ENCODE measurements at regions of chr17 and their contacts with region 1.

Region 1: GRCh38 chr17:64506576-64507477 is at the start of gene CEP95:
- DNase-seq: peak; percentile 91
- ATAC-seq: peak; percentile 53
- H3K4me3 Mint-ChIP-seq: peak within 1 kb of the TSS; percentile 100
- H3K27ac Mint-ChIP-seq: peak within 1 kb of the TSS; percentile 100
- H3K4me1 Mint-ChIP-seq: peaks cover 50% of the 10 kb centered on the region
- H3K27me3 Mint-ChIP-seq: no peaks in the 10 kb centered on the region
- CTCF ChIP-seq: no peak
- total RNA-seq, gene CEP95: 65.3 and 77.0 TPM in 2 replicates

Region 2: GRCh38 chr17:63773381-63774140 is 733.3 kb before region 1 on chr17 and contains the start of gene CCDC47:
- CTCF ChIA-PET with region 1: no interaction called
- POLR2A ChIA-PET with region 1: interaction called, 17 read pairs
- intact Hi-C with region 1: no loop called
- DNase-seq: peak; percentile 96
- ATAC-seq: peak; percentile 76
- H3K4me3 Mint-ChIP-seq: peak within 1 kb of the TSS; percentile 92
- H3K27ac Mint-ChIP-seq: peak within 1 kb of the TSS; percentile 99
- H3K4me1 Mint-ChIP-seq: peaks cover 59% of the 10 kb centered on the region
- H3K27me3 Mint-ChIP-seq: no peaks in the 10 kb centered on the region
- CTCF ChIP-seq: no peak
- total RNA-seq, gene CCDC47: 41.4 and 47.6 TPM in 2 replicates

Region 3: DNA sequence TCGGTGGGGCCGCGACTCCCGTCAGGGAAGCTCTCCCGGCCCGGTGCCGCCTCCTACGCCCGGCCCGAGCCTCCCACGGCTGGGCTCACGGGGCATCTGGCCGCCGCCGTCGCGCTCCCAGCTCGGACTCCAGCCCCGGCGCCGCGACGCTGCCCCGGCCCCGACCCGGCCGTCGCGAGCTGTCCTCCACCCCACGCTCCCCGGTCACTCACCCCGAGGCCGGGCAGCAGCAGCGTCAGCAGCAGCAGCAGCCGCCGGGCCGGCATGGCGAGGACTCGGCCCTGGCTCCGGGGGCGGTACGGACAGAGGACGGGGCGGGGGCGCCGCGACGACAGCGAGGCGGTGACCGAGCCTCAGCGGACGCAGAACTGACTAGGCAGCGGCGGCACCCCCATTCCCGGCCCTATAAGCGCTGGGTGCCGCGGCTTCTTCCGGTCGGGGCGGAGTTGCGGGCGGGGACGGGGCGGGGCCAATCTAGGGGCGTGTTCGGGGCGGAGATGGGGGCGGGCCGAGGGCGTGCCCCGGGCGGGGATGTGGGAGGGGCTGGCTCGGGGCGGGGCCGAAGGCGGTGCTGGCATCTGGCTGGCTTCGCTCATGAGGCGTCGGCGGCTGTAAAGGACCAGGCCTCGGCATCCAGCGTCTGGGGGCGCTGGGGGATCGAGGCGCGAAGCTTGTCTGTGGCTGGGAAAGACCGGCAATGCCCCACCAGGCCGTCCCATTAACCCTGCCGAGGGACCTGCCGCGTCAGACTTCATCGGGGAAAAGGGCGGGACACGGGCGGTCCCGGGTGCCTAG is 376.9 kb before region 1 on chr17 and contains the start of gene ERN1:
- CTCF ChIA-PET with region 1: no interaction called
- POLR2A ChIA-PET with region 1: interaction called, 6 read pairs
- intact Hi-C with region 1: loop called (anchors 1 kb)
- DNase-seq: peak; percentile 81
- ATAC-seq: peak; percentile 88
- H3K4me3 Mint-ChIP-seq: peak within 1 kb of the TSS; percentile 83
- H3K27ac Mint-ChIP-seq: peak within 1 kb of the TSS; percentile 88
- H3K4me1 Mint-ChIP-seq: peaks cover 27% of the 10 kb centered on the region
- H3K27me3 Mint-ChIP-seq: peaks cover 1% of the 10 kb centered on the region
- CTCF ChIP-seq: no peak
- total RNA-seq, gene ERN1: 11.9 and 12.9 TPM in 2 replicates

Region 4: GRCh38 chr17:64399071-64399766 is 107.6 kb before region 1 on chr17:
- CTCF ChIA-PET with region 1: no interaction called
- POLR2A ChIA-PET with region 1: interaction called, 12 read pairs
- intact Hi-C with region 1: no loop called
- DNase-seq: no peak
- ATAC-seq: no peak
- H3K4me3 Mint-ChIP-seq: no peak overlapping the region
- H3K27ac Mint-ChIP-seq: no peak overlapping the region
- H3K4me1 Mint-ChIP-seq: peaks cover 75% of the 10 kb centered on the region
- H3K27me3 Mint-ChIP-seq: no peaks in the 10 kb centered on the region
- CTCF ChIP-seq: no peak

Region 5: GRCh38 chr17:64448665-64449512 is 57.9 kb before region 1 on chr17 and contains the start of gene MILR1:
- CTCF ChIA-PET with region 1: interaction called, 5 read pairs
- POLR2A ChIA-PET with region 1: interaction called, 43 read pairs
- intact Hi-C with region 1: no loop called
- DNase-seq: no peak
- ATAC-seq: peak; percentile 98
- H3K4me3 Mint-ChIP-seq: peak within 1 kb of the TSS; percentile 85
- H3K27ac Mint-ChIP-seq: peak within 1 kb of the TSS; percentile 95
- H3K4me1 Mint-ChIP-seq: peaks cover 44% of the 10 kb centered on the region
- H3K27me3 Mint-ChIP-seq: no peaks in the 10 kb centered on the region
- CTCF ChIP-seq: no peak
- total RNA-seq, gene MILR1: 13.5 and 13.9 TPM in 2 replicates

Region 6: GRCh38 chr17:64732336-64733009 is 225.6 kb after region 1 on chr17:
- CTCF ChIA-PET with region 1: no interaction called
- POLR2A ChIA-PET with region 1: no interaction called
- intact Hi-C with region 1: no loop called
- DNase-seq: no peak
- ATAC-seq: no peak
- H3K4me3 Mint-ChIP-seq: no peak overlapping the region
- H3K27ac Mint-ChIP-seq: no peak overlapping the region
- H3K4me1 Mint-ChIP-seq: peaks cover 3% of the 10 kb centered on the region
- H3K27me3 Mint-ChIP-seq: no peaks in the 10 kb centered on the region
- CTCF ChIP-seq: no peak

Region 7: GRCh38 chr17:64984851-64985521 is 478.2 kb after region 1 on chr17:
- CTCF ChIA-PET with region 1: no interaction called
- POLR2A ChIA-PET with region 1: no interaction called
- intact Hi-C with region 1: loop called (anchors 5 kb)
- DNase-seq: no peak
- ATAC-seq: no peak
- H3K4me3 Mint-ChIP-seq: peak overlapping the region; percentile 81
- H3K27ac Mint-ChIP-seq: peak overlapping the region; percentile 99
- H3K4me1 Mint-ChIP-seq: peaks cover 64% of the 10 kb centered on the region
- H3K27me3 Mint-ChIP-seq: no peaks in the 10 kb centered on the region
- CTCF ChIP-seq: no peak

Measured in activated B cell treated with CpG ODN at 0.5 μM for 24 hours (primary cell).